Sigmoid colon (tissue), 7 donors: ENCODE measurements at regions of chr17 and their contacts with region 1.

Region 1: DNA sequence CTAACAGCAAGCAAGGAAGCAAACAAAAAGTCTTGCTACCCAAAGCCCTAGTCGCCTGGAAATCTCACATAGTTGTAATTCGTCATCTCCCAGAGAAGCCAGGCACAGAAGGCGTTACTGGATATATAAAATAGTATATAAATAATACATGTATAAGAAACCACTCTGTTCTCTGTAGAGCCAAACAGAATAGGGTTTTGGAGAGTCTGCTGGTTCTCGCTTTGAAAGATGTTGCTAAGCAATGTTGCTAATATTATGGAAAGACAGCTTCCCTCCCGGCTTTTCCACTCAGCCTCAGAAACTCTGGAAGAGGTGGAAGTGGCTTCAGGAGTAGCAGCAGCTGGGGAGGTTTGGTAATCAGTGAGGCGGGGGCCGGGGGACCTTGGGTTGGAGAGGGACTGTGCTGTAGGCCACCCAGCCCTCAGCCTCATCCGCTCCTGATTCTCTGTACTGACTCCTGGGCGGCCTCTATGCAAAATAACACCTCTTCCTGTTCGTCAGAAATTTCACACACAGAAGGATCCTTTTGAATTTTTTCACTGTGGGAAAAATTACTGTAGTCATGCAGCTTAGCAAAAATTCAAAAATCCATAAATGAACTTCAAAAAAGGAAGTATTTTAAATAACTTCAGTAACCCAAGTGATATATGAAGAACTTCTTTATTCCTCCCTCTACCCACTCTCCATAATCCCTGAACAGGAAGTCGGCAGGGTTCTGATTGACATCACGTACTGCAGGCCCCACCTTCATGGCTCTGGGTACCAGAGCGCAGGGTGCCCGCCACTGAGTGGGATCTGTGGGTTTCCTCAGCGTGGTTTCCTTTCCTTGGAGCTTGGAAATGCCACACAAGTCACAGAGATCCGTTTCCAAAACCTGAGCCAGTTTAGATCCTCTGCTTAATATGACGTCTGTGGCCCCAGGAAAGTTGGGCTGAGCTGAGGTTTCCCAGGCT is 51.4 kb downstream of the RAP1GAP2 start:
- DNase-seq: no peak
- H3K4me3 ChIP-seq: no peak overlapping the region
- H3K27ac ChIP-seq: peak overlapping the region in 2 of 4 donors; percentile 19 to 22
- H3K4me1 ChIP-seq: peaks cover 0 to 22% (median 10%) of the 10 kb centered on the region in 4 donors
- H3K27me3 ChIP-seq: no peaks in the 10 kb centered on the region
- CTCF ChIP-seq: no peak
- EP300 ChIP-seq: no peak
- POLR2A ChIP-seq: no peak

Region 2: DNA sequence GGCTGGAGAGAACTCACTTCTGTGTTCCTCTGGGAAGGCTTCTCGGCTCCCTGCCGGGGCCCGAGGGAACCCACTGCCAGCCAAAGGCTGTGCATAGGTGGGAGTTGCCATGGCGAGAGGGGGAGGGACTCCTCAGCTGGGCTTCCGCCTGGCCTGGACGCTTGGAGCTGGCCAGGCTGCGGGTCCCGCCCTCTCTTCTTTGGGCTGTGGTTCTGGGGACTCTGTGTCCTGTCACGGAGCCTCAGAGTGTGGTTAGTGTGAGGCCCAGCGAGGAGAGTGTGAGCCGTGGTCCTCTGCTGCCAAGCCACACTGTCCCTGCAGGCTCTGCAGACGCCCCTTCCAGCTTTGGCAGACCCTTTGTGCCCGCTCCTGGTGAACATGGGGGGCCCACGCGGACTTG is 92.7 kb after region 1 on chr17:
- intact Hi-C with region 1: no loop called
- DNase-seq: peak; percentile 85
- H3K4me3 ChIP-seq: peak overlapping the region in 1 of 4 donors; percentile 9
- H3K27ac ChIP-seq: peak overlapping the region in 3 of 4 donors; percentile 30 to 67 (median 49)
- H3K4me1 ChIP-seq: peaks cover 0 to 14% (median 13%) of the 10 kb centered on the region in 4 donors
- H3K27me3 ChIP-seq: no peaks in the 10 kb centered on the region
- CTCF ChIP-seq: no peak
- EP300 ChIP-seq: no peak
- POLR2A ChIP-seq: no peak

Region 3: DNA sequence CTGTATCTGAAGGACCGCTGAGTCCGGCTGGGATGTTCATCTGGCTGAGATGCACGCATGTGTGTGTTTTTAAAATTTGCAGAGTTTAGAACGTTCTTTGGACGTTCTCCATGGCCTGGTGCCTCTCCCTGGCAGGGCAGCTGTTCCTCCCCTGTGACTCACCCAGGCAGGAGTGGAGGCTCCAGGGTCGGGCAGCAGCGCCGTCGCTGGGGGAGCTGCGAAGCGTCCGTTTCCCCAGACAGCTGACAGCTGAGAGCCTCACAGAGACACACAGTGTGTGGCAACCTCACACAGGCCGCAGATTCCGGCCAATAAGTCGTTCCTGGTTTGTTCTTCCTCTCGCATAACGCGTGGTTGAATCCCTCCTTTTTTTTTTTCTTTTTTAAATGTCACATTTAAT is 135.2 kb after region 1 on chr17:
- intact Hi-C with region 1: loop called (anchors 2 kb)
- DNase-seq: peak; percentile 95
- H3K4me3 ChIP-seq: no peak overlapping the region
- H3K27ac ChIP-seq: peak overlapping the region; percentile 59 to 80 (median 78)
- H3K4me1 ChIP-seq: peaks cover 0 to 28% (median 15%) of the 10 kb centered on the region in 4 donors
- H3K27me3 ChIP-seq: no peaks in the 10 kb centered on the region
- CTCF ChIP-seq: peak in 2 of 4 experiments; percentile 39 to 41
- EP300 ChIP-seq: peak in 3 of 4 donors; percentile 39 to 83 (median 77)
- POLR2A ChIP-seq: no peak